ENCODE measurements at regions of chr12 and their contacts with region 1.

Region 1: DNA sequence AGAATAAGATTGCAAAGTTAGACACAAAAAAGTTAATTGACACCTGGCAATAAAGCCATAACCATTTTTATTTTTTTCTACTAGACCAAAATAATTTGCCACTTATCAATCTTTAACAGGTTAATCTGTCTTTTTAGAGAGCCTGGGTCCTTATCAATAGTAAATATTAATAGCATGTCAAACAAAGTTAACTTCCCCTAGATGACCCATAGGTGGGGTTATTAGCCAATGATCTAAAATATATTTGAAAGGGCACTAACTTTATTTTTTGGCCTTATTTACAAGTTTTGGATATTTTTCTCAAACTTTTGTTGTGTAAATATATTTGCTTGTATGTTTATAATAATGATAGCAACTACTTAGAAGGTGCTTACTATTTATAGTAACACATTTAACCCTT is 3.9 kb downstream of the ANKRD33 start:
- DNase-seq: no peak
- ATAC-seq: no peak
- H3K4me3 ChIP-seq: no peak overlapping the region
- H3K27ac ChIP-seq: no peak overlapping the region
- H3K4me1 ChIP-seq: peaks cover 0 to 32% of the 10 kb centered on the region in 2 donors
- H3K27me3 ChIP-seq: peaks cover 0 to 9% of the 10 kb centered on the region in 2 donors
- CTCF ChIP-seq: peak in 1 of 2 donors; percentile 35

Region 2: GRCh38 chr12:51836041-51836826 is 55.6 kb before region 1 on chr12:
- intact Hi-C with region 1: no loop called
- DNase-seq: no peak
- ATAC-seq: no peak
- H3K4me3 ChIP-seq: no peak overlapping the region
- H3K27ac ChIP-seq: no peak overlapping the region
- H3K4me1 ChIP-seq: peaks cover 0 to 18% of the 10 kb centered on the region in 2 donors
- H3K27me3 ChIP-seq: peaks cover 0 to 55% of the 10 kb centered on the region in 2 donors
- CTCF ChIP-seq: no peak

Region 3: GRCh38 chr12:51980051-51980808 is 88.4 kb after region 1 on chr12:
- intact Hi-C with region 1: loop called in 1 of 2 experiments (anchors 5 kb)
- DNase-seq: peak; percentile 65 to 85 (median 76)
- ATAC-seq: peak; percentile 90
- H3K4me3 ChIP-seq: no peak overlapping the region
- H3K27ac ChIP-seq: peak overlapping the region in 1 of 2 donors; percentile 18
- H3K4me1 ChIP-seq: peaks cover 6 to 47% of the 10 kb centered on the region in 2 donors
- H3K27me3 ChIP-seq: no peaks in the 10 kb centered on the region
- CTCF ChIP-seq: peak; percentile 98

Measured in left lung (tissue), 14 donors.